Caco-2 (cell line): ENCODE measurements at regions of chr1 and their contacts with region 1.

Region 1: DNA sequence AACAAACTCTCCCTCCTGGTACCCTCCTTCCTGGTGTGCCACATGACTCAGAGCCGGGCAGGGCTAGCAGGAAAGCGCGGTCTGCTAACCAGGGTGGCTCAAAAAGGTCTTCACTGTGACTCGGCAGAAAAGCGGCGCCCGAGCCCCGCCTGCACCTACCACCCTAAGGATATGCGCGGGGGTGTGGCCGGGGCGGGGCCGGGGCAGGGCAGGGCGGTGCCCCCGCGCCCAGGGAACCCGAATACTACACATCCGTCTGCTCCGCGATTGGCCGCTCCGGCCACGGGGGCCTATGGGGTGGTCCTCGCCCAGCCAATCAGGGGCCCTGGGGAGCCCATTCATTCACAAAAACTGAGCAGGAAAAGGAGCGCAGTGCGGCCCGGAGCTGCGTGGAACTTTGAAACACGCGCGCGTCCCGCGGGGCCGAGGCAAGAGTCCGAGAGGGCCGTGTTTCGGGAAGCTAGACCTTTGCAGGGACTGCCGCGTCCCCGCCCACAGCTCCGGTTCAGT is 1.7 kb downstream of the LRP8 start:
- DNase-seq: peak; percentile 90 to 91
- H3K4me3 ChIP-seq: peak overlapping the region; percentile 66
- H3K4me3 Mint-ChIP-seq: peak overlapping the region; percentile 81
- H3K27ac Mint-ChIP-seq: peak overlapping the region; percentile 93
- H3K4me1 ChIP-seq: peaks cover 29% of the 10 kb centered on the region
- H3K4me1 Mint-ChIP-seq: peaks cover 11% of the 10 kb centered on the region
- H3K27me3 ChIP-seq: no peaks in the 10 kb centered on the region
- H3K27me3 Mint-ChIP-seq: no peaks in the 10 kb centered on the region
- CTCF ChIP-seq: no peak

Region 2: GRCh38 chr1:53220171-53220961 is 105.8 kb before region 1 on chr1 and contains the start of gene CZIB:
- CTCF ChIA-PET with region 1: no interaction called
- POLR2A ChIA-PET with region 1: no interaction called
- intact Hi-C with region 1: no loop called
- DNase-seq: peak; percentile 93 to 95
- H3K4me3 ChIP-seq: peak within 1 kb of the TSS; percentile 94
- H3K4me3 Mint-ChIP-seq: peak within 1 kb of the TSS; percentile 89
- H3K27ac Mint-ChIP-seq: peak within 1 kb of the TSS; percentile 96
- H3K4me1 ChIP-seq: no peaks in the 10 kb centered on the region
- H3K4me1 Mint-ChIP-seq: no peaks in the 10 kb centered on the region
- H3K27me3 ChIP-seq: no peaks in the 10 kb centered on the region
- H3K27me3 Mint-ChIP-seq: no peaks in the 10 kb centered on the region
- CTCF ChIP-seq: no peak
- total RNA-seq, gene CZIB: 36.0 and 42.6 TPM in 2 replicates

Region 3: DNA sequence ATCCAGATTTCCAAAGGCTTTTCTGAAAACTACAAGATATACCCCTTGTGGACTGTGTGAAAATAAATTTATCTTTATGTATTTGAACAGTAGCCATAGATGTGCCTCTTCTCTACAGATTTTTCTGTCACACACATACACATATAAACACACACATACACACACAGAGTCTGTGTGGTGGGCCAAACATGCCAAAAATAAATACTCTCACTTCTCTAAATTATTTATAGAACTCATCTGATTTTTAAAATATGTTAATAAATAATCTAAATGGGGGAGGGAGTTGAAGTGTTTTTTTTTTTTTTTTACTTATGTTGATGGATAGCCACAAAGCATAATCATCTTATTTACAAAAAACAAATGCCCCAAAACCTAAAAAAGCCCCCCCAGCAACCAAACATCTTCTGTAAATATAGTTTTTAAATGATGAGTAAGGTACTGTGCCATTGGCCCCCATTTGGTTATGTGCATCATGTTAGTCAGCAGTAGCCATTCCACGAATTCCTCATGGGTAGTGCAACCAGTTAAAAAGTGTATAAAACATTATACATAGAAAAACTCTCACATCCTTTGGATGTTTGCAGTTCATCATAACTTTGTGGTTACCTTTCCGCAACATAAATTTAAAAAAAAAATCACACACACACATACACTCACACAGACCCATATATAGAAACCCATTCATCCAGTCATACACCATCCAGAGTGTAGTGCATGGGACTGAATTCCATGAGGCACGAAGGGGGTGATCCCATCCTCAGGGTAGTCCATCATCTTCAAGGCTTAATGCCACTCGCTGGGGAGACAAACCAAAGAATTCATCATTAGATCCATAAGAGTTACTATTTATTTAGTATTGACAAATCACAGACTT is 79.6 kb before region 1 on chr1:
- CTCF ChIA-PET with region 1: no interaction called
- POLR2A ChIA-PET with region 1: no interaction called
- intact Hi-C with region 1: no loop called
- DNase-seq: no peak
- H3K4me3 ChIP-seq: no peak overlapping the region
- H3K4me3 Mint-ChIP-seq: no peak overlapping the region
- H3K27ac Mint-ChIP-seq: no peak overlapping the region
- H3K4me1 ChIP-seq: no peaks in the 10 kb centered on the region
- H3K4me1 Mint-ChIP-seq: no peaks in the 10 kb centered on the region
- H3K27me3 ChIP-seq: no peaks in the 10 kb centered on the region
- H3K27me3 Mint-ChIP-seq: peaks cover 7% of the 10 kb centered on the region
- CTCF ChIP-seq: no peak

Region 4: DNA sequence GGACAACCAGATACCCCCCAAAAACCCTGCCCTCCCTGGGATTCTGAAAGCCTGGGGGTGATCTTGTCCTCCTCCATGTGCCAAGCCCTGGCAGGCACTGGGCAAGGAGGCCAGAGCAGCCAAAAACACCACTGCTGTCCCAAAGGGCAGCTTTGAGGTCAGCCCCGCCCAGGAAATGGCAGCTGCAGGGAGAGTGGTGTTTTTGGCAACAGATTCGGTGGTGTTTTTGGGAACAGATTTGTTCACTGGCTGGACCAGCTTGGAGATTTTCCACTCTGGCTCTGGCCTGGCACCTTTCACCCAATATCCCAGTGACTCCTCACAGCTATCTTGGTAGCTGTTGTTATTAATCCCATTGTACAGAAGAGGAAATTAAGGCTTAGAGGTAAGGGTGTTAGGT is 33.0 kb before region 1 on chr1:
- CTCF ChIA-PET with region 1: no interaction called
- POLR2A ChIA-PET with region 1: no interaction called
- intact Hi-C with region 1: no loop called
- DNase-seq: no peak
- H3K4me3 ChIP-seq: no peak overlapping the region
- H3K4me3 Mint-ChIP-seq: no peak overlapping the region
- H3K27ac Mint-ChIP-seq: no peak overlapping the region
- H3K4me1 ChIP-seq: no peaks in the 10 kb centered on the region
- H3K4me1 Mint-ChIP-seq: no peaks in the 10 kb centered on the region
- H3K27me3 ChIP-seq: no peaks in the 10 kb centered on the region
- H3K27me3 Mint-ChIP-seq: no peaks in the 10 kb centered on the region
- CTCF ChIP-seq: no peak

Region 5: GRCh38 chr1:53303726-53304515 is 22.2 kb before region 1 on chr1:
- CTCF ChIA-PET with region 1: no interaction called
- POLR2A ChIA-PET with region 1: no interaction called
- intact Hi-C with region 1: no loop called
- DNase-seq: no peak
- H3K4me3 ChIP-seq: no peak overlapping the region
- H3K4me3 Mint-ChIP-seq: no peak overlapping the region
- H3K27ac Mint-ChIP-seq: no peak overlapping the region
- H3K4me1 ChIP-seq: no peaks in the 10 kb centered on the region
- H3K4me1 Mint-ChIP-seq: no peaks in the 10 kb centered on the region
- H3K27me3 ChIP-seq: no peaks in the 10 kb centered on the region
- H3K27me3 Mint-ChIP-seq: no peaks in the 10 kb centered on the region
- CTCF ChIP-seq: no peak

Region 6: GRCh38 chr1:53362851-53363642 is 36.9 kb after region 1 on chr1:
- CTCF ChIA-PET with region 1: no interaction called
- POLR2A ChIA-PET with region 1: no interaction called
- intact Hi-C with region 1: loop called (anchors 5 kb)
- DNase-seq: peak in 1 of 2 experiments; percentile 8
- H3K4me3 ChIP-seq: no peak overlapping the region
- H3K4me3 Mint-ChIP-seq: no peak overlapping the region
- H3K27ac Mint-ChIP-seq: no peak overlapping the region
- H3K4me1 ChIP-seq: no peaks in the 10 kb centered on the region; the same call in 1 of the 2 replicates
- H3K4me1 Mint-ChIP-seq: no peaks in the 10 kb centered on the region
- H3K27me3 ChIP-seq: no peaks in the 10 kb centered on the region
- H3K27me3 Mint-ChIP-seq: no peaks in the 10 kb centered on the region
- CTCF ChIP-seq: no peak

Region 7: GRCh38 chr1:53393325-53393792 is 67.2 kb after region 1 on chr1:
- CTCF ChIA-PET with region 1: interaction called, 5 read pairs
- POLR2A ChIA-PET with region 1: no interaction called
- intact Hi-C with region 1: loop called (anchors 10 kb)
- DNase-seq: peak; percentile 56 to 82
- H3K4me3 ChIP-seq: no peak overlapping the region
- H3K4me3 Mint-ChIP-seq: no peak overlapping the region
- H3K27ac Mint-ChIP-seq: no peak overlapping the region
- H3K4me1 ChIP-seq: no peaks in the 10 kb centered on the region
- H3K4me1 Mint-ChIP-seq: no peaks in the 10 kb centered on the region
- H3K27me3 ChIP-seq: no peaks in the 10 kb centered on the region
- H3K27me3 Mint-ChIP-seq: peaks cover 5% of the 10 kb centered on the region
- CTCF ChIP-seq: peak; percentile 71 to 74